ENCODE measurements at regions of chr12 and their contacts with region 1.

Region 1: GRCh38 chr12:11649703-11650521 is 438 bp downstream of the ETV6 start:
- DNase-seq: peak; percentile 67
- ATAC-seq: peak; percentile 24

Region 2: DNA sequence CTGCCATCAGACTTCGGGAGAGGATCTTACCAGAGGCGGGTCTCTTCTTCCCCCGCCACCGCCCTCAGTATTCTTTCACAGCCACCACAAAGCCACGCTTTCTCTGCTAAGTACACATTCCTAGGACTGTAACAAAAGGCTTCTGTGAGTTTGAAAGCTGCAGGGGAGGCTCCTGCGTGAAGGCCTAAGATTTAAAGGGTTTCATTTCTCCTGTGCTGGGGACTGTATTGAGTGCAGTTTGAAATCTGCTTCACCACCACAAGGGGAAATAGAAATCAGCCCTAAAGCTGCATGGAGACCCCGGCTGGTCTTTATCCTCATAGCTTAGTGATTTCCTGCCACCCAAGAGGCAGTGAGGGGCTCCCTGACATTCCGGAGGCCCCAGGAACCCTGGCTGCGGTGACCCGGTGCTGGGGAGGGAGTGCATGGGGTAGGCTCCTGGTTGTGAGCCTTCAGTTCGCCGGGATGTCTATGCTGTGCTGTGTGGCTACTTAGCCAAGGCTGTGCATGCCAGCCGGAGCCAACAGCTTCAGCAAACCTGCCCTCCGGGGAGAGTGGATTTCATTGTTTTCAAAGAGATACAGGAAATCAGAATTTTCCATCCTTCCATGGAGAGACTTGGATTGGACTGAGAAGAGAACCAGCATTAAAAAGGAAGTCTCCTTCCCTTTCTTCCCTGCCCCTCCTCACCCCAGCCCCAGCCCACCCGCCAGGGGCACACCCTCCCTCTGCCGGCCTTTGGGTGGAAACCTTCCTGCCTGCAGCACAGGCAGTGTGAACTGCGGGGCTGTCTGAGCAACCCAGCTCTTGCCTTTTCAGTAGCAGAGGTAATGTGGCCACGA is 162.9 kb after region 1 on chr12:
- intact Hi-C with region 1: loop called (anchors 10 kb)
- DNase-seq: peak; percentile 61
- ATAC-seq: peak; percentile 80